ENCODE measurements at regions of chr4 and their contacts with region 1.

Region 1: GRCh38 chr4:138870737-138871554 is 144.6 kb upstream of the NOCT start:
- DNase-seq: peak in 8 of 9 donors; percentile 8 to 36 (median 24)
- ATAC-seq: peak; percentile 64
- H3K4me3 ChIP-seq: no peak overlapping the region
- H3K4me3 Mint-ChIP-seq: no peak overlapping the region
- H3K27ac ChIP-seq: no peak overlapping the region
- H3K27ac Mint-ChIP-seq: no peak overlapping the region
- H3K4me1 ChIP-seq: no peaks in the 10 kb centered on the region
- H3K4me1 Mint-ChIP-seq: no peaks in the 10 kb centered on the region
- H3K27me3 ChIP-seq: no peaks in the 10 kb centered on the region
- H3K27me3 Mint-ChIP-seq: peaks cover 13 to 27% (median 23%) of the 10 kb centered on the region in 5 donors

Region 2: DNA sequence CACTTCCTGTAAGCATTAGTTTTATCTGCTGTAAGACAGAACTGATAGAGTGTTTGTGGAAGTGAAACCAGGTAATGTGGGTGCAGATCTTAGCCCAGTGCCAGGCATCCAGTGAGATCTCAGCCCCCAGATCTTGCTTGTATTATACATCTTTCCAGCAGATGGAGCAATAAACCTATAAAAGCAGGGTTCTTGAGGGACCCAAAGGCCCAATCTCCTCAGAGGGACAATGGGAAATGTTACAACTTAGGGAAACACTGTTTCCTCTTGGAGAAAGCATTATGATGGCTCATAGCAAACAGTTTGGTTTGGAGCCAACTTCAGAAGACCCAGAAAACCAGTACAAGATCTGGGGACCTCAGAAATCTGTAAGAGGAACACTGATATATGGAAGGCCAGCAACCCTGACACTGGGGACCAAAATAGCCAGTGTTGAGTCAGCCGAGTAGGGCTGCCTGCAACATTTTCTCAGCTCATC is 835.1 kb before region 1 on chr4:
- CTCF ChIA-PET with region 1: interaction called, 3 read pairs
- POLR2A ChIA-PET with region 1: no interaction called
- intact Hi-C with region 1: loop called (anchors 5 kb)
- DNase-seq: no peak
- ATAC-seq: peak; percentile 60
- H3K4me3 ChIP-seq: no peak overlapping the region
- H3K4me3 Mint-ChIP-seq: no peak overlapping the region
- H3K27ac ChIP-seq: no peak overlapping the region
- H3K27ac Mint-ChIP-seq: no peak overlapping the region
- H3K4me1 ChIP-seq: no peaks in the 10 kb centered on the region
- H3K4me1 Mint-ChIP-seq: no peaks in the 10 kb centered on the region
- H3K27me3 ChIP-seq: no peaks in the 10 kb centered on the region
- H3K27me3 Mint-ChIP-seq: no peaks in the 10 kb centered on the region

Region 3: GRCh38 chr4:138659812-138660316 is 211.1 kb before region 1 on chr4:
- CTCF ChIA-PET with region 1: no interaction called
- POLR2A ChIA-PET with region 1: no interaction called
- intact Hi-C with region 1: no loop called
- DNase-seq: no peak
- ATAC-seq: no peak
- H3K4me3 ChIP-seq: no peak overlapping the region
- H3K4me3 Mint-ChIP-seq: no peak overlapping the region
- H3K27ac ChIP-seq: no peak overlapping the region
- H3K27ac Mint-ChIP-seq: no peak overlapping the region
- H3K4me1 ChIP-seq: no peaks in the 10 kb centered on the region
- H3K4me1 Mint-ChIP-seq: peaks cover 0 to 2% (median 0%) of the 10 kb centered on the region in 7 donors
- H3K27me3 ChIP-seq: no peaks in the 10 kb centered on the region
- H3K27me3 Mint-ChIP-seq: peaks cover 0 to 10% (median 6%) of the 10 kb centered on the region in 5 donors